Activated B cell treated with CpG ODN at 0.5 μM for 24 hours (primary cell): ENCODE measurements at regions of chr3 and their contacts with region 1.

Region 1: GRCh38 chr3:126083913-126084767 is at the start of gene SLC41A3:
- DNase-seq: peak; percentile 87
- ATAC-seq: peak; percentile 93
- H3K4me3 Mint-ChIP-seq: peak within 1 kb of the TSS; percentile 88
- H3K27ac Mint-ChIP-seq: peak within 1 kb of the TSS; percentile 85
- H3K4me1 Mint-ChIP-seq: peaks cover 16% of the 10 kb centered on the region
- H3K27me3 Mint-ChIP-seq: no peaks in the 10 kb centered on the region
- CTCF ChIP-seq: no peak
- total RNA-seq, gene SLC41A3: 34.8 and 36.2 TPM in 2 replicates

Region 2: GRCh38 chr3:125967138-125967537 is 117.0 kb before region 1 on chr3:
- CTCF ChIA-PET with region 1: no interaction called
- POLR2A ChIA-PET with region 1: interaction called, 3 read pairs
- intact Hi-C with region 1: loop called (anchors 5 kb)
- DNase-seq: no peak
- ATAC-seq: no peak
- H3K4me3 Mint-ChIP-seq: no peak overlapping the region
- H3K27ac Mint-ChIP-seq: no peak overlapping the region
- H3K4me1 Mint-ChIP-seq: peaks cover 4% of the 10 kb centered on the region
- H3K27me3 Mint-ChIP-seq: peaks cover 16% of the 10 kb centered on the region
- CTCF ChIP-seq: no peak

Region 3: GRCh38 chr3:125990253-125990970 is 93.7 kb before region 1 on chr3:
- CTCF ChIA-PET with region 1: no interaction called
- POLR2A ChIA-PET with region 1: interaction called, 3 read pairs
- intact Hi-C with region 1: loop called (anchors 1 kb)
- DNase-seq: peak; percentile 57
- ATAC-seq: peak; percentile 92
- H3K4me3 Mint-ChIP-seq: peak overlapping the region; percentile 98
- H3K27ac Mint-ChIP-seq: peak overlapping the region; percentile 92
- H3K4me1 Mint-ChIP-seq: peaks cover 11% of the 10 kb centered on the region
- H3K27me3 Mint-ChIP-seq: peaks cover 11% of the 10 kb centered on the region
- CTCF ChIP-seq: no peak

Region 4: GRCh38 chr3:126124148-126124868 is 40.2 kb after region 1 on chr3:
- CTCF ChIA-PET with region 1: no interaction called
- POLR2A ChIA-PET with region 1: no interaction called
- intact Hi-C with region 1: no loop called
- DNase-seq: peak; percentile 6
- ATAC-seq: no peak
- H3K4me3 Mint-ChIP-seq: no peak overlapping the region
- H3K27ac Mint-ChIP-seq: no peak overlapping the region
- H3K4me1 Mint-ChIP-seq: no peaks in the 10 kb centered on the region
- H3K27me3 Mint-ChIP-seq: peaks cover 3% of the 10 kb centered on the region
- CTCF ChIP-seq: no peak

Region 5: GRCh38 chr3:126357295-126358037 is 273.3 kb after region 1 on chr3 and contains the start of gene KLF15:
- CTCF ChIA-PET with region 1: no interaction called
- POLR2A ChIA-PET with region 1: interaction called, 5 read pairs
- intact Hi-C with region 1: loop called (anchors 2 kb)
- DNase-seq: peak; percentile 76
- ATAC-seq: peak; percentile 93
- H3K4me3 Mint-ChIP-seq: peak within 1 kb of the TSS; percentile 88
- H3K27ac Mint-ChIP-seq: no peak within 1 kb of the TSS
- H3K4me1 Mint-ChIP-seq: peaks cover 16% of the 10 kb centered on the region
- H3K27me3 Mint-ChIP-seq: peaks cover 35% of the 10 kb centered on the region
- CTCF ChIP-seq: no peak
- total RNA-seq, gene KLF15: 0.31 and 0.39 TPM in 2 replicates

Region 6: GRCh38 chr3:126703512-126704462 is 619.6 kb after region 1 on chr3 and contains the start of gene CHCHD6:
- CTCF ChIA-PET with region 1: no interaction called
- POLR2A ChIA-PET with region 1: no interaction called
- intact Hi-C with region 1: loop called (anchors 5 kb)
- DNase-seq: peak; percentile 94
- ATAC-seq: peak; percentile 96
- H3K4me3 Mint-ChIP-seq: peak within 1 kb of the TSS; percentile 99
- H3K27ac Mint-ChIP-seq: peak within 1 kb of the TSS; percentile 74
- H3K4me1 Mint-ChIP-seq: peaks cover 17% of the 10 kb centered on the region
- H3K27me3 Mint-ChIP-seq: peaks cover 32% of the 10 kb centered on the region
- CTCF ChIP-seq: no peak
- total RNA-seq, gene CHCHD6: 7.5 and 10.0 TPM in 2 replicates

Region 7: DNA sequence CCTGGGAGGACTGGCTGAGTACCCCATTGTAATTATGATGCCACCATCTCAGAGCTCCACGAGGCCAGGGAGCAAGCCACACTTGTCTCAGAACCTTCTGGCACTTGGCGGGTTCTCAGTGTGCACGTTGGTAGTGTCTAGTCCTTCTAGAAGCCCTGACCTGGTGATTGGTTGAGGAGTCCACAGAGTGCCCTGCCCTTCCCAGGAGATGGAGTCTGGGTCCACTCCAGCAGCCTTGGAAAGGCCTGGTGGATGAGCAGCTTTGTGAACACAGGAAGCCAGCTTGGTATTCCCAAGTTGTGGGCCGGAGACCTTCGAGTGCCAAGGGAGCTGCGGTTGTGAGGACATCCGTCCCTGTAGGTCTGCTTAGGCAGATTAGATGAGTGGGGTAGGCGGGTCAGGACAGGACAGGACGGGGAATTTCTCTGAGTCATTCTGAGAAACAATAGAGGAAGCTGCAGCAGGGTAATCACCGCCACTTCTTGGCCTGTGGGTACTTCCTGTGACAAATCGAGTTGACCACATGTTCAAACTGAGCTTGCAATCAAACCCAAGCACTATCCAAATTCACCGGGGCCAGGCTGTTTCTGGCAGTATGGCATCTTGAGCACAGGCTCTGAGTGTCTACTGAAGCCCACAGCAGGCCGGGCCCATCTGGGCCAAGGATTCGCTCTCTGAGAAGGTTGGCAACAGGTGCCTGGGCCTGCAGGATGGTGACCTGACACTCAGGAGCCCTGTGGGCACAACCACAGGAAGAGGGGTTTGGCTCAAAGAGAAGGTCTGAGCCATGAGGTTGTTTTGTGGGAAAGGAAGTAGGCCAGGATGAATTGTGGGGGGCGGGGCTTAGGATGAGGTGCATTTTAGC is 827.3 kb after region 1 on chr3:
- CTCF ChIA-PET with region 1: no interaction called
- POLR2A ChIA-PET with region 1: no interaction called
- intact Hi-C with region 1: loop called (anchors 5 kb)
- DNase-seq: peak; percentile 65
- ATAC-seq: peak; percentile 94
- H3K4me3 Mint-ChIP-seq: peak overlapping the region; percentile 75
- H3K27ac Mint-ChIP-seq: peak overlapping the region; percentile 95
- H3K4me1 Mint-ChIP-seq: peaks cover 44% of the 10 kb centered on the region
- H3K27me3 Mint-ChIP-seq: peaks cover 36% of the 10 kb centered on the region
- CTCF ChIP-seq: no peak